Aorta (tissue), 5 donors: ENCODE measurements at regions of chr2 and their contacts with region 1.

Region 1: DNA sequence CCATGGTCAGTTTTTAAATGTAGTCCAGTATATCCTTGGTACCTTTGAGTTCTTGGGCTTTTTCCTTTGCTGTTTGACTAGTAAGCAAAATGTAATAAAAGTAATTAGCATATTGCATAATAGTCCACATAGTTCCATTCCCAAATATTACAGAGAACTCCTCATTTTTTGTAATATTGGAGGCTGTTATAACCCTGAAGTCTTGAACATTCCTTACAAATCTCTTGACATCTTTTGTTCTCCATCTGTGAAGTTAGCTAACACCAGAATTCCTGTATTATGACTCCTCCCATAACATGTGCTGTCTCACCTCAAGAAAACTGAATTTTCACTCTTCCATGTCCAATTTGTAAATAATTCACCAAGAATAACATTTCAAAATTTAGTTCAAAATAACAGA is 17.1 kb downstream of the CREB1 start:
- DNase-seq: no peak
- ATAC-seq: no peak
- H3K4me3 ChIP-seq: no peak overlapping the region
- H3K27ac ChIP-seq: no peak overlapping the region
- H3K4me1 ChIP-seq: no peaks in the 10 kb centered on the region
- H3K27me3 ChIP-seq: no peaks in the 10 kb centered on the region

Region 2: GRCh38 chr2:207529330-207530159 is 17.3 kb before region 1 on chr2 and contains the start of gene CREB1:
- intact Hi-C with region 1: loop called in 1 of 2 experiments (anchors 2 kb)
- DNase-seq: peak; percentile 99 to 100
- ATAC-seq: peak; percentile 99
- H3K4me3 ChIP-seq: peak within 1 kb of the TSS; percentile 96 to 100
- H3K27ac ChIP-seq: peak within 1 kb of the TSS; percentile 99 to 100
- H3K4me1 ChIP-seq: peaks cover 0 to 3% of the 10 kb centered on the region in 2 donors
- H3K27me3 ChIP-seq: no peaks in the 10 kb centered on the region
- total RNA-seq, gene CREB1: 62.0 to 88.7 TPM

Region 3: DNA sequence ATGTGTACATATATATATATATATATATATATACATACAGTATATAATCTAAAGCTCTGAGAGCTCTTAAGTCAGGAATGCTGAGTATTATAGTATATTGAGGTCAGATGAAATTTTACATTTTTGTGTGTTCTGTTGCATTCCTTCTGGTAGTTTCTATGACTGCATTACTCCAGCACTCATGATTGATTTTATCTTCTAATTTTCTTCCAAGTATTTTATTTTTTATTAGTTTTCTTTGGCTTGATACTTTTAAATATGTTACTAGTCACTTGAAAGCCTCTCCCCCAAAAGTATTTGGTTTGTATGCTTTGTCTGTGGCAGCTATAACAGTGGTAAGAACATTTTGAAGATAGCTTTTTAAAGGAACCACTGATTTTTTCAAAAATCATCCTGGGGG is 53.4 kb after region 1 on chr2:
- intact Hi-C with region 1: no loop called
- DNase-seq: no peak
- ATAC-seq: no peak
- H3K4me3 ChIP-seq: no peak overlapping the region
- H3K27ac ChIP-seq: no peak overlapping the region
- H3K4me1 ChIP-seq: no peaks in the 10 kb centered on the region
- H3K27me3 ChIP-seq: no peaks in the 10 kb centered on the region